Right lobe of liver (tissue), 6 donors: ENCODE measurements at regions of chr18 and their contacts with region 1.

Region 1: GRCh38 chr18:12038639-12039417 is 54.8 kb upstream of the ANKRD62 start:
- DNase-seq: peak; percentile 88 to 91 (median 89)
- ATAC-seq: peak; percentile 98 to 100 (median 98)
- H3K4me3 ChIP-seq: peak overlapping the region; percentile 48 to 64 (median 61)
- H3K27ac ChIP-seq: no peak overlapping the region
- H3K4me1 ChIP-seq: no peaks in the 10 kb centered on the region
- H3K27me3 ChIP-seq: no peaks in the 10 kb centered on the region
- CTCF ChIP-seq: peak; percentile 99 to 100 (median 100)
- POLR2A ChIP-seq: peak; percentile 17

Region 2: DNA sequence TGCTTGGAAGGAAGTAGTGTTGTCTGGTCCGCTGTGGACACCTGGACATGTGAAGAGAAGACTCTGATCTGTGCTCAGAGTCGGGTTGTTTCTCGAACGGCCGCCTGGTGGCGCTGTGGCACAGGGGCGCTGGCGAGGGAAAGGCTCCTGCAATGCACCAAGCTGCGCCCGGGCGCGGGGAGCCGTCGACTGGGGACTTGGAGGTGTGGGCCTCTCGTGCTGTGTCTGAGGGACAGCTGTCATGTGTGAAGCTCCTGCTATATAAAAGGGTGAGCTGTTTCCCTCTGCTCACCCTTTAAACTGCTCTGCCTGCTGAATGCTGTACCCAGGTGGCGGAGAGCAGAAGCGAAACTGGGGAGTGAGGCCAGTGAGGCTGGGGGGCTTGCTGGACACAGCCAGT is 305.8 kb before region 1 on chr18:
- intact Hi-C with region 1: loop called in 1 of 2 experiments (anchors 10 kb)
- DNase-seq: peak; percentile 79 to 81 (median 80)
- ATAC-seq: peak; percentile 96 to 99 (median 98)
- H3K4me3 ChIP-seq: no peak overlapping the region
- H3K27ac ChIP-seq: no peak overlapping the region
- H3K4me1 ChIP-seq: no peaks in the 10 kb centered on the region
- H3K27me3 ChIP-seq: no peaks in the 10 kb centered on the region
- CTCF ChIP-seq: peak; percentile 76 to 95 (median 92)
- POLR2A ChIP-seq: no peak

Region 3: DNA sequence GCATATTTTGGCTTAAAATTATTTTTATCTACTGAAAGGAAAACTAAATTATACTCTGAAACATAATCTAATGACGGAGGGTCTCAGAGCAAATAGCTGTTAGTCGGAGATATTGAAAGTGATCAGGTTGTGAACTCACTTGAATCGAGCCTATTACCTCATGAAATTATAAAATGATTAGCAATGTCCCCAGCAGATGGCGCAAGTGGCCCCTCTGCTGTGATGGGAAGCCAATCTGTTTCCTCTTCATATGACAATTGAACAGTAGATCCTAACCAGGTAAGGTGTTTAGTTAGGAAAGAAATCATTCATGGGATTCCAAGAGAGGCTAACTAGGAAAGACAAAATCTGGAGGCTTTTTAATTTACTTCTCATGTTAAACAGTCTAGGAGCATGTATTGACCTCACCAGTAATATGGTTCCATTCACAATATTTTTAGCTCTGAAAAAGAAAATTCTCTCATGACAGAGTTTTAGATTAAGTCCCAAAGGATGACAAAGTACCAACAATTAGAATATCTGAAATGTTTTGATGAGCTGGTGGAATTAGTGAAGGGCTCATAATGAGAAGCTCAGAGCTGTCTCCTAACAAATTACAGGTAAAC is 100.9 kb before region 1 on chr18:
- intact Hi-C with region 1: loop called in 1 of 2 experiments (anchors 10 kb)
- DNase-seq: peak; percentile 72 to 74 (median 73)
- ATAC-seq: peak; percentile 96 to 99 (median 98)
- H3K4me3 ChIP-seq: no peak overlapping the region
- H3K27ac ChIP-seq: no peak overlapping the region
- H3K4me1 ChIP-seq: peaks cover 0 to 6% (median 0%) of the 10 kb centered on the region in 4 donors
- H3K27me3 ChIP-seq: no peaks in the 10 kb centered on the region
- CTCF ChIP-seq: peak; percentile 82 to 88 (median 84)
- POLR2A ChIP-seq: no peak

Region 4: DNA sequence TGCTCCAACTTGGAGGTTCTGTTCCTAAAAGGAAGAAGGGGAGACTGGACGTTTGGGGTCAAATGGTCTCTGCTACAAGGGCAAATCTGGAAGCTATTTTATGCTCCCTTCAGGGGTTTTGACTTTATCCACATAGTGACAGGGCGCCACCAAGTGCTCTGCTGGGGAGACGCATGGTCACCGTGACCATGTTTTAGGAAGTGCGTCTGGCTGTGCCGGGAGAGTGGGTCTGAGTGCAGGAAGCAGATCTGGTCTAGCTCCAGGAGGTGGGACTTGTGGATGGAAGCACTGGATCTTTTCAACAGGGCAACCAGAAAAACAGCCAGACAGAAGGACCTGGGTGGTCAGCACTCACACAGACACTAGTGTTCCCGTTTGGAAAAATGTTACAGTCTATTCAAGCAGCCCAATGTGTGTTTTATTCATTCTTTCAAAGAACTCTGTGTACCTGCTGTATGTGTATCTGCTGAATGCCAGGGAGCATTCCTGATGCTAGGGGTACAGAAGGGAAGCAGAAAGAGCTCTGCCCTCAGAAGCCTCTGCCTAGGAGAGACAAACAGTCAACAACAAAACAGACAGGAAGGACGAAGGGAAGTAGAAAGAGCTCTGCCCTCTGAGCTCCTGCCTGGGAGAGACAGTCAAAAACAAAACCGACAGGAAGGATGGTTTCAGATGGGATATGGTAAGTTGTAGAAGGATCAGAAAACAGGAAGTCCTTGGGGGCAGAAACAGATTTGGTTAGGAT is 43.2 kb before region 1 on chr18:
- intact Hi-C with region 1: loop called in 1 of 2 experiments (anchors 5 kb)
- DNase-seq: peak; percentile 79 to 81 (median 80)
- ATAC-seq: peak; percentile 85 to 92 (median 90)
- H3K4me3 ChIP-seq: no peak overlapping the region
- H3K27ac ChIP-seq: peak overlapping the region; percentile 19 to 29 (median 25)
- H3K4me1 ChIP-seq: peaks cover 0 to 34% (median 10%) of the 10 kb centered on the region in 4 donors
- H3K27me3 ChIP-seq: no peaks in the 10 kb centered on the region
- CTCF ChIP-seq: peak; percentile 80 to 84 (median 84)
- POLR2A ChIP-seq: no peak